H1 (cell line): ENCODE measurements at regions of chr17 and their contacts with region 1.

Region 1: GRCh38 chr17:39668199-39668966 is at the start of gene PNMT:
- DNase-seq: peak in 1 of 2 experiments; percentile 87
- H3K4me3 ChIP-seq: peak within 1 kb of the TSS; percentile 29 to 67 (median 32)
- H3K27ac ChIP-seq: no peak within 1 kb of the TSS
- H3K4me1 ChIP-seq: peaks cover 0 to 43% (median 36%) of the 10 kb centered on the region in 4 experiments; a peak in 6 of 7 replicates
- H3K27me3 ChIP-seq: peaks cover 0 to 25% (median 6%) of the 10 kb centered on the region in 4 experiments; a peak in 4 of 7 replicates
- CTCF ChIP-seq: peak; percentile 63 to 72 (median 67)
- EP300 ChIP-seq: no peak
- POLR2A ChIP-seq: no peak
- RAD21 ChIP-seq: peak; percentile 19 to 61; a peak in 3 of 4 replicates
- total RNA-seq, gene PNMT: 4.4 and 5.6 TPM in 2 replicates

Region 2: DNA sequence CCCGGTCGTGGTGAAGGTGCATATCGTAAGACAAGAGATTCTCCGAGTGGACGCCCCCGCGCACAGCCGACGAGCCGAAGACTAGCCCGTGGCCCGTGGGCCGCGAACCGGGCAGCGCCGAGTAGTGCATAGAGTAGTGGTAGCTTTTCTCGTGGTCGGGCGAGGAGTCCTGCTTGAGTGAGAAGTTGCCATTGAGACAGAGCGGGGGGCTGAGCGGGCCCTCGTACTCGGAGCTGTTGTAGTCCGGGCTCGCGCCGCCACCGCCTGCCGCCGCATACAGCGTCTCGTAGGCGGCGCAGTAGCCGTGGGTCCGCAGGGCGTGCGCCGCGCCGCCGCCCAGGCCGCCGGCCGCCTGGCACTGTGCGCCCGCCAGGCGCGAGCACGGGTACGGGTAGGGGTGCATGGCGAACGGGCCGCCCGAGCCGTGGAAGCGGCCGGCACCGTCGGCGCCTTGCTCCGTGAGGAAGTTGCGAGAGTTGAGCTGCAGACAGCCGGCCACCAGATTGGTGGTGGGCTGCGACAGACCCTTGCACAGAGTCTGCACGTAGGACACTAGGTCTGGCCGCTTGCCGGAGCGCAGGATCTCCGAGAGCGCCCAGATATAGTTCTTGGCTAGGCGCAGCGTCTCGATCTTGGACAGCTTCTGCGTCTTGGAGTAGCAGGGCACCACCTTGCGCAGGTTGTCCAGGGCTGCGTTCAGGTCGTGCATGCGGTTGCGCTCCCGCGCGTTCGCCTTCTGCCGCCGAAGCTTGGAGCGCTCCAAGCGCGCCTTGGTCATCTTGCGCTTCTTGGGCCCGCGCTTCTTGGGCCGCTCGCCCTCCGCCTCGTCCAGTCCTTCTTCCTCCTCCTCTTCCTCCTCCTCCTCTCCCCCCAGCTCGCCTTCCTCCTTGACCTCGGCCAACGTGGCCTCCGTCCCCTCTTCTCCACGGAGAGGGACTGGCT is 62.6 kb before region 1 on chr17:
- CTCF ChIA-PET with region 1: interaction called, 1,885 read pairs
- POLR2A ChIA-PET with region 1: interaction called, 5 read pairs
- DNase-seq: peak in 1 of 2 experiments; percentile 81
- H3K4me3 ChIP-seq: peak overlapping the region; percentile 19 to 59 (median 34); a peak in 7 of 8 replicates
- H3K27ac ChIP-seq: no peak overlapping the region
- H3K4me1 ChIP-seq: peaks cover 5 to 50% (median 28%) of the 10 kb centered on the region in 4 experiments
- H3K27me3 ChIP-seq: peaks cover 78 to 95% (median 91%) of the 10 kb centered on the region in 4 experiments
- CTCF ChIP-seq: no peak
- EP300 ChIP-seq: no peak
- POLR2A ChIP-seq: no peak
- RAD21 ChIP-seq: no peak

Region 3: DNA sequence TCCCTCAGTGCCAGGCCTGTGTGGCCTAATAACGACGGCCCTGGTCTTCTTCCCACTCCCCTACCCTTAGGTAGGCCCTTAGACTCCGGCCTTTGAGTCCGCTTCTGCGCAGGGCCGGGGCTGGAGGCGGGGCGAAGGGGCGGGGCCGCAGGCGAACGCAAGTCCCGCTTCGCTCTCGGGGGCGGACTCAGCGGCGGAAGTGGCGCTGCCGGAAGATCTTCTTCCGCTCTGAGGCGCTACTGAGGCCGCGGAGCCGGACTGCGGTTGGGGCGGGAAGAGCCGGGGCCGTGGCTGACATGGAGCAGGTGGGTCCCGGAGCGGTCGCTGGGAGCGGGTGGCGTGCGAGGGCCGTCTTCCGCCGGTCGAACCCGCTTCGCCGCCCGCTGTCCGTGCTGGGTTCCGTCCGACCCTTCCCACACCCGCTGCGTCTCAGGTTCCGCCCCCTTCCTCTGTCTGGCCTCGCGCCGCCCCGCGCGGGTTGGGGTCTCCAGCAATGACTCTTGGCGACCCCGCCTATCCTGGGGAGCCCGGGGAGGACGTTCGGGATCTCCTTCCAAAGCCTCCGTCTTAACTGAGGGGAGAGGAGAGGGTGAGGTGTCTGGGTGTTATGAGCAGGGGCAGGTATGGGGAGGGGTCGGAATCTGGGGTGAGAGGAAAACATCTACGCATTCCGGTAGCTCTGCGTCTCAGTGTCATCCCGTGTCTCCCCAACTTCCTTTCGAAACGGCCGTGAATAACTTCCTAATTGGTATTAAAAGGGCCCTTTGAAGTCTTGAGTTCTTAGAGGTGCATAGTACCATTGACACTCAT is 31.3 kb before region 1 on chr17 and contains the start of gene STARD3:
- CTCF ChIA-PET with region 1: interaction called, 1,885 read pairs
- POLR2A ChIA-PET with region 1: interaction called, 22 read pairs
- DNase-seq: peak in 1 of 2 experiments; percentile 92
- H3K4me3 ChIP-seq: peak within 1 kb of the TSS; percentile 79 to 91 (median 85)
- H3K27ac ChIP-seq: peak within 1 kb of the TSS; percentile 64; the same call in 1 of the 2 replicates
- H3K4me1 ChIP-seq: peaks cover 13 to 40% (median 26%) of the 10 kb centered on the region in 4 experiments
- H3K27me3 ChIP-seq: 0 out of 7 replicates have a peak, but pooled peaks cover 0 to 3% (median 0%) of the 10 kb centered on the region in 4 experiments
- CTCF ChIP-seq: peak in 2 of 3 experiments; percentile 18 to 32; a peak in 3 of 4 replicates
- EP300 ChIP-seq: 0 out of 3 replicates have a peak, but pooled peaks of 1 of the 2 experiments have one; percentile 22
- POLR2A ChIP-seq: peak in 1 of 2 experiments; percentile 61; a peak in 2 of 3 replicates
- RAD21 ChIP-seq: 0 out of 4 replicates have a peak, but pooled peaks of 1 of the 2 experiments have one; percentile 6
- total RNA-seq, gene STARD3: 47.6 and 56.7 TPM in 2 replicates

Region 4: DNA sequence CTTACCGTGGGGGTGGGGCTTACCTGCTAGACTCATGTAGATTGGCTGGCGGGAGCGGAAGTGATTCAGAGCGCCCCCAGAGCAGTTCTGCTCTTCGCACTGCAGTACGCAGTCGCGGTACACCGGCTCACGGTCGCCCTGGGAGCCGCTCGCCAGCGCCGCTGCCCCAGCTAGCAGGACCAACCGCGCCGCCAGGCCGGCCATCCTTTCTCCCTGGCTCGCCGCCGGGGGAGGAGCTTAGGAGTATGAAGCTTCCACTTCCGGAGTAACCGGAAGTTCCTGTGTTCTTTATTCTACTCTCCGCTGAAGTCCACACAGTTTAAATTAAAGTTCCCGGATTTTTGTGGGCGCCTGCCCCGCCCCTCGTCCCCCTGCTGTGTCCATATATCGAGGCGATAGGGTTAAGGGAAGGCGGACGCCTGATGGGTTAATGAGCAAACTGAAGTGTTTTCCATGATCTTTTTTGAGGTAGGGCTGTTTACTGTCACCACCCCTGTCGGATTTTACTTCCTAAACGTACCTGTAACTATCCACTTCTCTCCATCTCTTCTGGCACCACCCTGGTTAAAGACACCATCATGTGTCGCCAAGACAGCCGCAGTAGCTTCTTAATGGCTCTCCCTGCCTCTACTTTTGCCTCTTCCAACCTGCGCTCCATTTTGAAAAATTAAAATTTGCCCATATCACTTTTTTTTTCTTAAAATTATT is 19.6 kb after region 1 on chr17 and contains the start of gene PGAP3:
- CTCF ChIA-PET with region 1: interaction called, 165 read pairs
- POLR2A ChIA-PET with region 1: interaction called, 708 read pairs
- DNase-seq: peak; percentile 85 to 91
- H3K4me3 ChIP-seq: peak within 1 kb of the TSS; percentile 75 to 84 (median 80)
- H3K27ac ChIP-seq: peak within 1 kb of the TSS; percentile 97
- H3K4me1 ChIP-seq: peaks cover 0 to 13% (median 3%) of the 10 kb centered on the region in 4 experiments
- H3K27me3 ChIP-seq: no peaks in the 10 kb centered on the region
- CTCF ChIP-seq: no peak
- EP300 ChIP-seq: no peak
- POLR2A ChIP-seq: peak; percentile 77 to 91
- RAD21 ChIP-seq: no peak; a peak in 1 of 4 replicates
- total RNA-seq, gene PGAP3: 18.5 and 21.0 TPM in 2 replicates

Region 5: GRCh38 chr17:39710002-39710964 is 41.9 kb after region 1 on chr17:
- CTCF ChIA-PET with region 1: interaction called, 10 read pairs
- POLR2A ChIA-PET with region 1: interaction called, 708 read pairs
- DNase-seq: no peak
- H3K4me3 ChIP-seq: no peak overlapping the region
- H3K27ac ChIP-seq: no peak overlapping the region
- H3K4me1 ChIP-seq: peaks cover 0 to 11% (median 6%) of the 10 kb centered on the region in 4 experiments; a peak in 6 of 7 replicates
- H3K27me3 ChIP-seq: no peaks in the 10 kb centered on the region
- CTCF ChIP-seq: no peak
- EP300 ChIP-seq: no peak
- POLR2A ChIP-seq: no peak
- RAD21 ChIP-seq: no peak